ENCODE measurements at regions of chr1 and their contacts with region 1.

Region 1: GRCh38 chr1:26145041-26145959 is 13.6 kb upstream of the FAM110D start:
- DNase-seq: peak; percentile 78
- ATAC-seq: peak; percentile 90
- H3K4me3 Mint-ChIP-seq: no peak overlapping the region
- H3K27ac Mint-ChIP-seq: no peak overlapping the region
- H3K4me1 Mint-ChIP-seq: peaks cover 2% of the 10 kb centered on the region
- H3K27me3 Mint-ChIP-seq: peaks cover 29% of the 10 kb centered on the region

Region 2: DNA sequence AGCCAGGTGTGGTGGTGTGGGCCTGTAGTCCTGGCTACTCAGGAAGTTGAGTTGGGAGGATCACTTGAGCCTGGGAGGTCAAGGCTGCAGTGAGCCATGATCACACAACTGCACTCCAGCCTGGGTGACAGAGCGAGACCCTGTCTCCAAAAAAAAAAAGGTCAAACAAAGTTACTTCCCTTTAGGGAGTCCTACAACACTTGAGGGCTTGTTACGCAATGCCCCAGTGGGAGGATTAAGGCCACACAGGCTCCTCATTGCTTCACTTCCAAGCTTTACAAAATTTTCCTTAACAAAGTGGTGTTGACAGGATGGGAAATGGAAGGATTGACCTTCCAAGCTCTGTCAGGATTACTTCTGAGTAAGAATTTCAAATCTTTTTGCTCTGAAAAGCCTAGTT is 129.9 kb before region 1 on chr1:
- CTCF ChIA-PET with region 1: no interaction called
- DNase-seq: no peak
- ATAC-seq: no peak
- H3K4me3 Mint-ChIP-seq: no peak overlapping the region
- H3K27ac Mint-ChIP-seq: no peak overlapping the region
- H3K4me1 Mint-ChIP-seq: peaks cover 10% of the 10 kb centered on the region
- H3K27me3 Mint-ChIP-seq: peaks cover 8% of the 10 kb centered on the region

Region 3: DNA sequence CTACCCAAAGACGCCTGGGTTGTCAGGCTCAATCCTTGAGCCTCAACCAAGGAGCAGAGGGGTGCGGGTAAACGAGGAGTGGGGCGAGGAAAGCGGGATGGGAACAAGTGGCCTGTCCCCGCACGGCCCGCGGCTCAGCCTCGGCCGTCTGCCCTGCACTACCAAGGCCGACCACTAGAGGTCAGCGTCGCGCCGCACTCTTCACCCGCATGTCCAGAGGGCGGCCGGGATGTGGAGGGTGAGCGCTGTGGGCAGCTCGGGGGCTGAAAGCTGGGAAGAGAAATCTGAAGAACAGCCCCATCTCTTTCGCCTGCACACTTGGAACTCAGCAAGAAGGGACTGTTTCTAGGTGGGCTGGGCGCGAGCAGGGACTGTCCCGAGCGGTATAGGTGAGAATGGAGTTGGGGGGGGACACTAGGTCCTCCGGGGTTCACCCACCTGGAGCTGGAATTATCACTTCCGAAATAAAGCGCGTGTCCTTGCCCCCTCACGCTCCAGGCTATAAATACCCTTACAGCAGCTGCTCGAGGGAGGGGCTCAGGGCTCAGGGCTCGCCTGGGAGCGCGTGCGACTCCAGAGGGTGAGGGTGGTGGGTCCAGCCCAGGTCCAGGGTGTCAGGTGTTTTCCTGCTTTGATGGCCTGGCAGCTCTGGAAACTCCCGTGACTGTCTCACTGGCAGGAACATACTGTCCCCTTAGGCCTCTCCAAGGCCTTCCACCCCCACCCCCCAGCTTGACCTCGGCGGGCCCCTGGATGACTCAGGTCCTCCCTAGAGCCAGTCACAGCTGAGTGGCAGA is 109.1 kb before region 1 on chr1:
- CTCF ChIA-PET with region 1: interaction called, 34 read pairs
- DNase-seq: peak; percentile 79
- ATAC-seq: peak; percentile 70
- H3K4me3 Mint-ChIP-seq: peak overlapping the region; percentile 89
- H3K27ac Mint-ChIP-seq: no peak overlapping the region
- H3K4me1 Mint-ChIP-seq: peaks cover 8% of the 10 kb centered on the region
- H3K27me3 Mint-ChIP-seq: peaks cover 15% of the 10 kb centered on the region

Region 4: GRCh38 chr1:26097696-26098095 is 47.6 kb before region 1 on chr1:
- CTCF ChIA-PET with region 1: interaction called, 181 read pairs
- DNase-seq: peak; percentile 45
- ATAC-seq: peak; percentile 85
- H3K4me3 Mint-ChIP-seq: no peak overlapping the region
- H3K27ac Mint-ChIP-seq: no peak overlapping the region
- H3K4me1 Mint-ChIP-seq: peaks cover 17% of the 10 kb centered on the region
- H3K27me3 Mint-ChIP-seq: peaks cover 43% of the 10 kb centered on the region

Region 5: DNA sequence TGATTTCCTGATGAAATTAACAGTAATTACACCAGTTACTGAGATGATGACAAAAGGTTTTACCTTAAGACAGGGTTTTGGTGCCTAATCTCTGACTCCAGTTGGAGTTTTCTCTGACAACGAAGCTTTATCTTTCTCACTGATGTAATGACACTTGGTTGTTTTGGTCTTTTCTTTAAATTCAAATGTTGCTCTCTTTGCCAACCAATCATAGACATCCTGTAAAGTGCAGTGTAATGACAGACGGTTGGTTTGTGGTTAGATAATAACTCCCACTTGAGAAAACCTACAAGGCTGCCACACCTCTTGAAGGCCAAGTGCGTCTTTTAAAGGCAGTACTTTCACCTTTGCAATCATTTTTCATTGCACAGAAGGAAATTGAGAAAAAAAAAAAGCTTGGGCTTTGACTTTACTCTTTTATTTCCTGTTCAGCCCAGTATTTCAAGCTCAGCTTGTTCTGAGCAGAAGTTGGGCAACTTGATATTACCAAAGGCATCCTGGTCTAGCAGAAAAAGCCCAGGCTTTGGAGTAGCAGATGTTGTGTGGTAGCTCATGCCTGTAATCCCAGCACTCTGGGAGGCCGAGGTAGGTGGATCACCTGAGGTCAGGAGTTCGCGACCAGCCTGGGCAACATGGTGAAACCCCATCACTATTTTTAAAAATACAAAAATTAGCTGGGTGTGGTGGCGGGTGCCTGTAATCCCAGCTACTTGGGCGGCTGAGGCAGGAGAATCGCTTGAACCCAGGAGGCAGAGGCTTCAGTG is 18.8 kb before region 1 on chr1:
- CTCF ChIA-PET with region 1: interaction called, 69 read pairs
- DNase-seq: peak; percentile 79
- ATAC-seq: peak; percentile 94
- H3K4me3 Mint-ChIP-seq: peak overlapping the region; percentile 74
- H3K27ac Mint-ChIP-seq: peak overlapping the region; percentile 94
- H3K4me1 Mint-ChIP-seq: peaks cover 57% of the 10 kb centered on the region
- H3K27me3 Mint-ChIP-seq: peaks cover 5% of the 10 kb centered on the region

Region 6: GRCh38 chr1:26161415-26162219 is 16.3 kb after region 1 on chr1:
- CTCF ChIA-PET with region 1: interaction called, 31 read pairs
- DNase-seq: peak; percentile 52
- ATAC-seq: peak; percentile 64
- H3K4me3 Mint-ChIP-seq: peak overlapping the region; percentile 48
- H3K27ac Mint-ChIP-seq: no peak overlapping the region
- H3K4me1 Mint-ChIP-seq: peaks cover 20% of the 10 kb centered on the region
- H3K27me3 Mint-ChIP-seq: peaks cover 67% of the 10 kb centered on the region

Region 7: DNA sequence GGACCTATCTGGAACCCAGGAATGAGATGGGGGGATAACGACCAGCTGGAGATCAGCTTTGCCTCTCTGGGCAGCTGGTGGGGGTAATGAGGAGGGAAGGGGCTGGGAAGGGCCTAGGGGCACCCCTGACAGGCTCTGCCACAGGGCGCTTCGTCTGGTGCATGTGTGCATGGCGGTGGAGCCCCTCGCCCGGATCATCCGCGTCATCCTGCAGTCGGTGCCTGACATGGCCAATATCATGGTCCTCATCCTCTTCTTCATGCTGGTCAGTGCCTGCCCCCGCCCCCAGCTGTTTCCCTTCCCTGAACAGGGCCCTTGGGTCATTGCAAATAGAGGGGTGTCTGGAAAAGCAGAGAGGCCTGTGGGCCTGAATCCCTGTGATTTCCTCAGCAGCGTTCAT is 52.5 kb after region 1 on chr1:
- CTCF ChIA-PET with region 1: no interaction called
- DNase-seq: no peak
- ATAC-seq: no peak
- H3K4me3 Mint-ChIP-seq: no peak overlapping the region
- H3K27ac Mint-ChIP-seq: no peak overlapping the region
- H3K4me1 Mint-ChIP-seq: peaks cover 25% of the 10 kb centered on the region
- H3K27me3 Mint-ChIP-seq: peaks cover 9% of the 10 kb centered on the region

Measured in activated CD8-positive, alpha-beta memory T cell treated with anti-CD3 and anti-CD28 coated beads, Interleukin-2, amount 10 ng/mL, durations not matched to agents 7 days and 5 days (primary cell).